A549 (cell line): ENCODE measurements at regions of chr13 and their contacts with region 1.

Region 1: GRCh38 chr13:95624020-95624419 is 20.5 kb downstream of the DZIP1 start:
- DNase-seq: peak; percentile 25 to 52
- ATAC-seq: peak; percentile 59 to 78; a peak in 4 of 6 replicates
- H3K4me3 ChIP-seq: no peak overlapping the region
- H3K27ac ChIP-seq: no peak overlapping the region
- H3K4me1 ChIP-seq: no peaks in the 10 kb centered on the region
- CTCF ChIP-seq: peak; percentile 66
- EP300 ChIP-seq: no peak
- POLR2A ChIP-seq: no peak
- RAD21 ChIP-seq: peak; percentile 74 to 77

Region 2: GRCh38 chr13:95660981-95661581 is 37.1 kb after region 1 on chr13:
- CTCF ChIA-PET with region 1: interaction called, 13 read pairs
- POLR2A ChIA-PET with region 1: no interaction called
- DNase-seq: peak; percentile 31 to 42
- ATAC-seq: peak in 1 of 2 experiments; percentile 56; a peak in 2 of 6 replicates
- H3K4me3 ChIP-seq: no peak overlapping the region
- H3K27ac ChIP-seq: no peak overlapping the region
- H3K4me1 ChIP-seq: no peaks in the 10 kb centered on the region
- CTCF ChIP-seq: peak; percentile 55
- EP300 ChIP-seq: no peak
- POLR2A ChIP-seq: no peak
- RAD21 ChIP-seq: peak; percentile 59 to 68; a peak in 4 of 5 replicates

Region 3: GRCh38 chr13:95698047-95698749 is 74.2 kb after region 1 on chr13:
- CTCF ChIA-PET with region 1: no interaction called
- POLR2A ChIA-PET with region 1: no interaction called
- DNase-seq: no peak
- ATAC-seq: peak in 1 of 2 experiments; percentile 56; a peak in 3 of 6 replicates
- H3K4me3 ChIP-seq: no peak overlapping the region
- H3K27ac ChIP-seq: no peak overlapping the region
- H3K4me1 ChIP-seq: no peaks in the 10 kb centered on the region
- CTCF ChIP-seq: no peak
- EP300 ChIP-seq: no peak
- POLR2A ChIP-seq: no peak
- RAD21 ChIP-seq: no peak

Region 4: DNA sequence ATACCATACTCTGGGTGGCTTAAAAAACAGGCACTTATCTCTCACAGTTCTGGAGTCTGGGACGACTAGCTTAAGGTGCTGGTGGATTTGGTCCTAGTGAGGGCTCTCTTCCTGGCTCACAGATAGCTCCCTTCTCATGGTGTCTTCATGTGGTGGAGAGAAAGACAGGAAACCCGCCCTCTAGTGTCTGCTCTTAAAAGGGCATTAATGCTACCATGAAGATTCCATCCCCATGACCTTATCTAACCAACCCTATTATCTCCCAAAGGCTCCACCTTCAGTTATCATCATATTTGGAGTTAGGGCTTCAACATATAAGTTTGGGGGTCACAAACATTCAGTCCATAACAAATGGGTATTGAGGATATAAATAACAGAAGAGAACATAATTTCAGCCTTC is 605.3 kb after region 1 on chr13:
- CTCF ChIA-PET with region 1: no interaction called
- POLR2A ChIA-PET with region 1: no interaction called
- DNase-seq: peak in 1 of 2 experiments; percentile 35
- ATAC-seq: peak; percentile 34 to 81; a peak in 4 of 6 replicates
- H3K4me3 ChIP-seq: no peak overlapping the region
- H3K27ac ChIP-seq: no peak overlapping the region
- H3K4me1 ChIP-seq: no peaks in the 10 kb centered on the region
- CTCF ChIP-seq: peak; percentile 33; the same call in 2 of the 3 replicates
- EP300 ChIP-seq: no peak
- POLR2A ChIP-seq: no peak
- RAD21 ChIP-seq: 0 out of 5 replicates have a peak, but pooled peaks of 1 of the 2 experiments have one; percentile 27